ENCODE measurements at regions of chr13 and their contacts with region 1.

Region 1: DNA sequence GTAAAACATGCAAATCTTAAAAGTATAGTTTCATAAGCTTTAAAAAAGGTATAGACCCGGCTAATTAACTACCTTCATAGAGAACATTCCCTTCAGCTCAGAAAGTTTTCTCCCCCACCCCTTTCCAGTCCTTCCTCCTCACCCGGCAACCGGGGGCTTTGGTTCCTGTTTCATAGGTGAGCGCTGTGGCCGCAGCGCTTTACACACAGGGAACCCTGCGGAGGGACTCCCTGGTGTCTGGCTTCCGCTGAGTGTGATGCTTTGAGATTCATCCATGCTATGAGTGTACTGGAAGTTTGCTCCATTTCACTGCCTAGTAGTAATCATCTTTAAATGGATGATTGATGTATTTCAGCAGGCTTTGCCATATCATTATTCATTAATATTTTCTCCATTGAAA is 26.0 kb upstream of the PABPC3 start:
- DNase-seq: no peak
- H3K4me3 Mint-ChIP-seq: no peak overlapping the region
- H3K27ac Mint-ChIP-seq: no peak overlapping the region
- H3K4me1 Mint-ChIP-seq: no peaks in the 10 kb centered on the region
- H3K27me3 Mint-ChIP-seq: peaks cover 40% of the 10 kb centered on the region
- CTCF ChIP-seq: no peak

Region 2: GRCh38 chr13:25085125-25085742 is 15.3 kb after region 1 on chr13:
- CTCF ChIA-PET with region 1: interaction called, 14 read pairs
- POLR2A ChIA-PET with region 1: interaction called, 3 read pairs
- intact Hi-C with region 1: no loop called
- DNase-seq: peak; percentile 66
- H3K4me3 Mint-ChIP-seq: no peak overlapping the region
- H3K27ac Mint-ChIP-seq: no peak overlapping the region
- H3K4me1 Mint-ChIP-seq: no peaks in the 10 kb centered on the region
- H3K27me3 Mint-ChIP-seq: no peaks in the 10 kb centered on the region
- CTCF ChIP-seq: peak; percentile 52